ENCODE measurements at regions of chr4 and their contacts with region 1.

Region 1: DNA sequence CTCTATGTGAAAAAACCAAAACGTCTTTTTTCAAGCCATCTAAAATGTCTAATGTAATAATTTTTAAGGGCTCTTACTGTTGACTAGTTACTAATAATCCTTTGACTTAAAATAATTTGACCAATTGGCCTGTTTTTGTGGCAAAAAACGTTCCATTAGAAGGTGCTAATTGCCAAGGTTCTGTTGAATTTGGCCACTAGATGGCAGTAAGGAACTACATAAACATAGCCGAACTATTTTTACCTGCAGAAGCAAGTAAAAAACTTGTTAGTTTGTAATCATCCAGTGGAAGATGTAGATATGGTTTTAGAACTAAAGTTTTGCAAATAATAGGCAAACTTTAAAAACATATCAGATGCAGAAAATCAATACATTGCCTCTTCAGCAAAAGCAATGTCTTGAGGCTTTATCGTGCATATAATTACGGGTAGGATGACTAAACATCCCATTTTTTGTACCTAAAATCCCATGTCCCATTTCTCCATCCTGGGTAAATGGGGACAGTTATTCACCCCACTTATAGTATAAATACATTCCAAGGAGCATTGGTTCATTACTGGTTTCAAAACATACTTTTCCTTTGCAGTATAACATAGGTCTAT is 57.6 kb downstream of the PROM1 start:
- DNase-seq: no peak
- ATAC-seq: peak in 1 of 2 donors; percentile 33
- H3K4me3 ChIP-seq: no peak overlapping the region
- H3K27ac ChIP-seq: no peak overlapping the region
- H3K4me1 ChIP-seq: peaks cover 4 to 8% of the 10 kb centered on the region in 2 donors
- H3K27me3 ChIP-seq: no peaks in the 10 kb centered on the region
- CTCF ChIP-seq: peak; percentile 70 to 88 (median 84)
- POLR2A ChIP-seq: no peak

Region 2: DNA sequence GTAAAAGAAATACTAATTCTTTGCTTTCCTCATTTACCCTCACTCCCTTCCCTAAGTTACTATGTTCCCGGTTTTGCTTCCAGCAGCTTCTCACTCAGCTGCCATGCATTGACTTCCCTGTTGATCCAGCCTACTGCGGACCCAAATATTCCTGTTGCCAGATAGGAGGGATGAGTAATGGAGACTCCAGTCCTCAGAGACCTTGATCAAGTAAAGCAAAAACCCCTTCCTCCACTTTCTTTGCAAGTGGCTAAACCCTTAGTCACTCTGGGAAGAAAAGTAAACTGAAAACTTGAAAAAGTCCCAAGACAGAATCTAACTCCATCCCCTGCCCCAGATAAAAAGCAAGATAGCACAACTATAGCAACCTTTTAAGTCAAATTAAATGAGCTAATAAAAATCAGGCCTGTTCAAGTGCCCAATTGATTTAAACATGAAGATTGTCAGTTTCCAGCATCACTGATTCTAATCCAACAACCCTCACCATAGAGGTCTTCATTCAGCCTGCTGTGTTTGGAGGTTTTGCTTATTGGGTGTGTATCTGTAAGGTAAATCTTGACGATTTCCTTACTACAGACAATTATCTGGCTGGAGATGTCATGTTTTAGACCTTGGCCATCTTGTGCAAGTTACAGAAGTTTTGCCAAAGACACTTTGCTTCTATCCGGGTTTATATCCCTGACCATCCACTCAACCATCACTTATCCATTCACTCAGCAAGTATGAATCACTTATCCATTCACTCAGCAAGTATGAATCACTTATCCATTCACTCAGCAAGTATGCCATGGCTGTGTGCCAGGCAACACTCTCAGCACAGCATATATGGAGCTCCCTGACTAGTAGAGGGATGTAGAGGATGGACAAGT is 105.3 kb before region 1 on chr4:
- in situ Hi-C with region 1: no loop called
- intact Hi-C with region 1: no loop called
- DNase-seq: no peak
- ATAC-seq: no peak
- H3K4me3 ChIP-seq: no peak overlapping the region
- H3K27ac ChIP-seq: no peak overlapping the region
- H3K4me1 ChIP-seq: no peaks in the 10 kb centered on the region
- H3K27me3 ChIP-seq: no peaks in the 10 kb centered on the region
- CTCF ChIP-seq: no peak
- POLR2A ChIP-seq: no peak

Region 3: GRCh38 chr4:16196478-16197393 is 170.5 kb after region 1 on chr4:
- in situ Hi-C with region 1: loop called in 2 of 4 experiments (anchors 10 to 25 kb)
- intact Hi-C with region 1: no loop called
- DNase-seq: no peak
- ATAC-seq: peak; percentile 80 to 90
- H3K4me3 ChIP-seq: peak overlapping the region in 1 of 4 donors; percentile 19
- H3K27ac ChIP-seq: peak overlapping the region in 3 of 4 donors; percentile 12 to 44 (median 33)
- H3K4me1 ChIP-seq: peaks cover 40 to 48% of the 10 kb centered on the region in 2 donors
- H3K27me3 ChIP-seq: no peaks in the 10 kb centered on the region
- CTCF ChIP-seq: peak in 3 of 5 experiments; percentile 19 to 35 (median 32)
- POLR2A ChIP-seq: no peak

Region 4: GRCh38 chr4:16212138-16212782 is 186.0 kb after region 1 on chr4:
- in situ Hi-C with region 1: no loop called
- intact Hi-C with region 1: loop called (anchors 5 kb)
- DNase-seq: no peak
- ATAC-seq: no peak
- H3K4me3 ChIP-seq: no peak overlapping the region
- H3K27ac ChIP-seq: peak overlapping the region in 2 of 4 donors; percentile 3 to 4
- H3K4me1 ChIP-seq: peaks cover 33 to 40% of the 10 kb centered on the region in 2 donors
- H3K27me3 ChIP-seq: no peaks in the 10 kb centered on the region
- CTCF ChIP-seq: no peak
- POLR2A ChIP-seq: no peak

Region 5: DNA sequence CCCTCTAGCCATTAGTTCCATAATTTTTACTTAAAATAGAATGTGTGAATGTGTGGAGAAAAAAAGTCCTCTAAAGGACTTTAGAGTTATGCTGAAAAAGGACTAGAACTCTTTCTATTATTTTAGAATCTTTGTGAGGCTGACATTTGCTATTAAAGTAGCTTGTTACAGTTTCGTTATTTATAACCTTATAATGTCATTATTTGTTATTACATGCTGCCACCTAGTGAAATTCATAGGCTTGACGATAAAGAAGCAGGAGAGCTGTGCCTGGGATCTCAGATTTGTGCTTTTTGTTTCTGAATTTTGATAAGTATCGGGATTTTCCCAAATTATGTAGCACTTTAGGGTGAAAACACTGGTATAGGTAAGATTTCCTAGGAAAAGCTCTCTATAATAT is 238.5 kb after region 1 on chr4:
- in situ Hi-C with region 1: loop called (anchors 5 kb)
- intact Hi-C with region 1: loop called (anchors 1 kb)
- DNase-seq: no peak
- ATAC-seq: peak; percentile 80 to 82
- H3K4me3 ChIP-seq: no peak overlapping the region
- H3K27ac ChIP-seq: no peak overlapping the region
- H3K4me1 ChIP-seq: peaks cover 0 to 7% of the 10 kb centered on the region in 2 donors
- H3K27me3 ChIP-seq: no peaks in the 10 kb centered on the region
- CTCF ChIP-seq: peak; percentile 30 to 70 (median 67)
- POLR2A ChIP-seq: no peak

Region 6: DNA sequence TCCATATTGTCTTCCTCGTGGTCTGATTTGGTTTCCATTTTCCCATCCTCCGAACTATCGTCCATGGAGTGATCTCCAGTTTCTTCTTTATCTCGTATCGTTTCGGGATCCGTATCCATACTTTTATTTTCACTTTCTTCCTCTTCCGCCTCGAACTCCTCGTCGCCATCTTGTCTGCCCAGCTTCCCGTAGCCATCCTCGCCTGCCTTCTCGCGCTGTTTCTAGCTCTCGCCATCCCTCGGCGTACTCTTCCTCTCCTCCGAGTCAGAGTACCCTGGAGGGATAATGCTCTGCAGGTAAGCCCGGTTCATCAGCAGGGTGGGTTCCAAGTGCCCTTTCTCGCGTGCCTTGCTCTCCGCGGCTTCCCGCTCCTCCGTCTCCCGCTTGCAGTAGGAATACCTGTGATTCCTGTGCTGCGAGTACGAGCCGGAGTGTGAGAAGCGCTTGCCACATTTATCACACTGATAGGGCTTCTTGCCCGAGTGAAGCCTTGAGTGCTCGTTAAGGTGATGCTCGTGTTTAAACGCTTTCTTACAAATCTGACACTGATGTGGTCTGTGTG is 334.5 kb after region 1 on chr4:
- in situ Hi-C with region 1: no loop called
- intact Hi-C with region 1: no loop called
- DNase-seq: no peak
- ATAC-seq: no peak
- H3K4me3 ChIP-seq: no peak overlapping the region
- H3K27ac ChIP-seq: no peak overlapping the region
- H3K4me1 ChIP-seq: no peaks in the 10 kb centered on the region
- H3K27me3 ChIP-seq: no peaks in the 10 kb centered on the region
- CTCF ChIP-seq: no peak
- POLR2A ChIP-seq: no peak

Region 7: DNA sequence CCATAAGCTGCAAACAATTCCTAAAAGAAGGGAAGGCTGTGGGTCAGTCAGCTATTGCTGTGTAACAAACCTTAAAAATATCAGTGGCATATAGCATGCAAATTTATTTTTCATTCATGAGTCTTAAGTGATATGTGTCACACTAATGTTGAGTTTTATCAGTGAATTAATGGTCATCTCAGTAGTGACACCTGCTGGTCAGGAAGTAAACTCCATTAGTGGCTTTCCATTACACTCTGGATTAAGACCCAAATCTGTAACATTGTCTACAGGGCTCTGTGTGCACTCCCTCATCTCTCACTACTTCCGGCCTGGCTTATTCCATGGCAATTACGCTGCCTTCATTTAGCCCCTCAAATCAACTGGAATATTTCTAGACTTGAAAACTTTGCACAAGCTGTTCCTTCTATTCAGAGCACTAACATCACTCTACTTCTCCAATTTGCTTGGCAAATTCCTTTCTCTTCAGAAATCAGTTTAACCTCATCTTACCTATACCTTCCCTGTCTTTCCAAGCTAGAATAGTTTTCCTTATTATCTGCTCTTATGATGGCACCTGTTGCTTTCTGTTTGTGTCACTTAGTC is 417.3 kb after region 1 on chr4:
- in situ Hi-C with region 1: loop called in 1 of 4 experiments (anchors 25 kb)
- intact Hi-C with region 1: no loop called
- DNase-seq: no peak
- ATAC-seq: no peak
- H3K4me3 ChIP-seq: no peak overlapping the region
- H3K27ac ChIP-seq: no peak overlapping the region
- H3K4me1 ChIP-seq: no peaks in the 10 kb centered on the region
- H3K27me3 ChIP-seq: no peaks in the 10 kb centered on the region
- CTCF ChIP-seq: peak in 4 of 5 experiments; percentile 11 to 44 (median 38)
- POLR2A ChIP-seq: no peak

Region 8: GRCh38 chr4:17468371-17469221 is 1442.3 kb after region 1 on chr4:
- in situ Hi-C with region 1: loop called in 1 of 4 experiments (anchors 25 kb)
- intact Hi-C with region 1: no loop called
- DNase-seq: no peak
- ATAC-seq: peak in 1 of 2 donors; percentile 30
- H3K4me3 ChIP-seq: peak overlapping the region in 1 of 4 donors; percentile 28
- H3K27ac ChIP-seq: no peak overlapping the region
- H3K4me1 ChIP-seq: no peaks in the 10 kb centered on the region
- H3K27me3 ChIP-seq: no peaks in the 10 kb centered on the region
- CTCF ChIP-seq: peak in 2 of 5 experiments; percentile 50 to 58
- POLR2A ChIP-seq: no peak

Measured in gastrocnemius medialis (tissue), 4 donors.